ENCODE measurements at regions of chr6 and their contacts with region 1.

Region 1: DNA sequence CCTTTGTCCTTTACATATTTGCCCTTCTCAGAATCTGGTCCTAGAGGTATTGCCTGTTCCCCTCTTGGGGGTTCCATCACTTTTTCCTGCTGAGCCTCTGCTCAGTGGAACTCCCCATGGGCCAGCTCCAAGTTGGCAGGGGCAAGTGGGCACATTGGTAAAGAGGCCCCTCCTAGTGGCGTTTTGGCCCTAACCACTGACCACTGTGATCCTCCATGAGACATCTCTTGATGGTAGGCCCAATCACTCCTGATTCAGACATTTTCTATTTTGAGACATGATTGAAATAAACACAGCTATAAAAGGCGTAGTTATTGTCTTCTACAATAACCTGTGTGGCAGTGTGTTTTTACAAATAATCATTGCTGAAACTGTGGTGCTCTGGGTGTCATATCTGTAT is 83.0 kb downstream of the RREB1 start:
- DNase-seq: no peak
- ATAC-seq: no peak
- H3K4me3 ChIP-seq: no peak overlapping the region
- H3K27ac ChIP-seq: no peak overlapping the region
- H3K4me1 ChIP-seq: peaks cover 3% of the 10 kb centered on the region; the same call in 1 of the 2 replicates
- H3K27me3 ChIP-seq: no peaks in the 10 kb centered on the region
- CTCF ChIP-seq: no peak

Region 2: DNA sequence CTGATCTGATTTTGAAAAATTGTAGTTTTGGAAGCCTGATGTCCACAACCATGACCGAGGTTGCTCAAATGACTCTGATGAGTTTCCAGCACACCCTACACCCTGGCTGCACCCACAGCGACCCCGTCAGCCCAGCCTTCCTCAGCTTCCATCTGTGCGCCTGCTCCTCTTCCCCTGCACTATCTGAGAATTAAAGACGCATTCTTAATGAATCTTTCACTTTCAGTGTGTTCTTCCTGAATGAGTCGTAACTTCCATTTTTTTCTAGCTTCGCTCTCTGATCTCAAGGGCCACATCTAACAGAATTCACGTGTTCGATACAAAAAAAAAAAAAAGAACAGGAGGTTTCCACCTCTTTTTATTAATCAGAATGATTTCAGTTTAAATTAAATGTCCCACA is 104.3 kb before region 1 on chr6:
- CTCF ChIA-PET with region 1: no interaction called
- POLR2A ChIA-PET with region 1: no interaction called
- intact Hi-C with region 1: no loop called
- DNase-seq: no peak
- ATAC-seq: no peak
- H3K4me3 ChIP-seq: no peak overlapping the region
- H3K27ac ChIP-seq: no peak overlapping the region
- H3K4me1 ChIP-seq: no peaks in the 10 kb centered on the region
- H3K27me3 ChIP-seq: no peaks in the 10 kb centered on the region
- CTCF ChIP-seq: no peak

Region 3: GRCh38 chr6:7145885-7146828 is 44.6 kb before region 1 on chr6:
- CTCF ChIA-PET with region 1: no interaction called
- POLR2A ChIA-PET with region 1: no interaction called
- intact Hi-C with region 1: loop called (anchors 5 kb)
- DNase-seq: peak; percentile 76
- ATAC-seq: peak; percentile 65
- H3K4me3 ChIP-seq: peak overlapping the region; percentile 51
- H3K27ac ChIP-seq: peak overlapping the region; percentile 79
- H3K4me1 ChIP-seq: peaks cover 55% of the 10 kb centered on the region
- H3K27me3 ChIP-seq: no peaks in the 10 kb centered on the region
- CTCF ChIP-seq: no peak